Caco-2 (cell line): ENCODE measurements at regions of chr13 and their contacts with region 1.

Region 1: DNA sequence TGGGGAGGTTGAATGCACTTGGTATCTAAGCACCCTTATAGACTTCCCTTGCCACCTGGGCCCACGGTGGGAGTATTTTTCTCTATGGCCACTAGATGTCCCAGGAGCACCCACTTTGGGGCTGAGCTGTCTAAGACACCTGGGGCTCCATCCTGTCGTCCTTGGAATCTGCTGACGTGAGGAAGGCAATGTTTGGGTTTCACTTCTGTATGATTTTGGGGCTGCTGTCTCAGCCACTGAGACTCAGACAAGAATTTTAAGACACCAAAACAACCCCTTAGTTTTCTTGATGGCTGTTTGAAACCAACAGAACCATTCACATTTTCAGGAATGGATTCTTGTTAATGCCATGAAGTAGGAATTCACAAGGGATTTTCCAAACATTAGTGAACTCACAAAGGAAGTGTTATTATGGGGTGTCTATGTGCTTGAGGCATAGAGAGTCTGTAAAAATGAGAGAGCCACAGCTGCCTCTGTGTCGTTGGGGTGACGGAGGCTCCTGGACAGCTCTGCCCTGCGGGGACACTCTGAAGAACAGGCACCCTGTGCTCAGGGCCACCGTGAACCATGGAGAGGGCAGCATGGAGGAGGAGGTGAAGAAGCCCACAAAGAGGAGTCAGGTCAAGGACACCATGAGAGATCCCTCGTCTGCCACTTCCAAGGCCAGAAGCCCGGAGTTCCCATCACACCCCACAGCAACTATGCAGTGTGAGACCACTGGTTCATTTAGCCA is 106.8 kb upstream of the SPATA13 start:
- DNase-seq: peak; percentile 82 to 85
- H3K4me3 ChIP-seq: no peak overlapping the region
- H3K4me3 Mint-ChIP-seq: no peak overlapping the region
- H3K27ac Mint-ChIP-seq: no peak overlapping the region
- H3K4me1 ChIP-seq: no peaks in the 10 kb centered on the region
- H3K4me1 Mint-ChIP-seq: peaks cover 13% of the 10 kb centered on the region
- H3K27me3 ChIP-seq: no peaks in the 10 kb centered on the region
- H3K27me3 Mint-ChIP-seq: no peaks in the 10 kb centered on the region
- CTCF ChIP-seq: peak; percentile 82 to 85

Region 2: GRCh38 chr13:24020375-24020830 is 33.3 kb before region 1 on chr13:
- CTCF ChIA-PET with region 1: interaction called, 3 read pairs
- POLR2A ChIA-PET with region 1: no interaction called
- intact Hi-C with region 1: loop called (anchors 1 kb)
- DNase-seq: peak in 1 of 2 experiments; percentile 46
- H3K4me3 ChIP-seq: no peak overlapping the region
- H3K4me3 Mint-ChIP-seq: no peak overlapping the region
- H3K27ac Mint-ChIP-seq: no peak overlapping the region
- H3K4me1 ChIP-seq: no peaks in the 10 kb centered on the region; the same call in 1 of the 2 replicates
- H3K4me1 Mint-ChIP-seq: no peaks in the 10 kb centered on the region
- H3K27me3 ChIP-seq: no peaks in the 10 kb centered on the region
- H3K27me3 Mint-ChIP-seq: no peaks in the 10 kb centered on the region
- CTCF ChIP-seq: peak; percentile 56 to 77

Region 3: DNA sequence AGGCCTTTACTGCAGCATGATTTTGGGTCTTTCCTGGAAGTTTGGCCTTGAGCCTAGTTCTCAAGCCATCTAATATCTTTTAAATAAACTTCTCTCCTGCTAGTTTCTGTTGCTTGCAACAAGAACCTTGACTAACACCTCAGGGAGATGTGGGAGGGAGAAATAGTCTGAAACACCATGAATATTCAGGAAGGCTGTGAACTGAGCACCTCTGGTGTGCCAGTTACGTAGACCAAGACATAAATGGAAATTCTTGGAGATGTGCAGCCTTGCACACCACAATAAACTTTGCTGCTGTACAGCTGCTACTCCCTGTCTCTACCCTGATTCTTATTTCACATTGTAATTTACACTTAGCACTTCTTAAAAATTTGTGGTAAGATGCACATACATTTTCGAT is 20.0 kb after region 1 on chr13:
- CTCF ChIA-PET with region 1: no interaction called
- POLR2A ChIA-PET with region 1: no interaction called
- intact Hi-C with region 1: no loop called
- DNase-seq: no peak
- H3K4me3 ChIP-seq: no peak overlapping the region
- H3K4me3 Mint-ChIP-seq: no peak overlapping the region
- H3K27ac Mint-ChIP-seq: no peak overlapping the region
- H3K4me1 ChIP-seq: peaks cover 15% of the 10 kb centered on the region
- H3K4me1 Mint-ChIP-seq: peaks cover 9% of the 10 kb centered on the region
- H3K27me3 ChIP-seq: no peaks in the 10 kb centered on the region
- H3K27me3 Mint-ChIP-seq: no peaks in the 10 kb centered on the region
- CTCF ChIP-seq: no peak

Region 4: DNA sequence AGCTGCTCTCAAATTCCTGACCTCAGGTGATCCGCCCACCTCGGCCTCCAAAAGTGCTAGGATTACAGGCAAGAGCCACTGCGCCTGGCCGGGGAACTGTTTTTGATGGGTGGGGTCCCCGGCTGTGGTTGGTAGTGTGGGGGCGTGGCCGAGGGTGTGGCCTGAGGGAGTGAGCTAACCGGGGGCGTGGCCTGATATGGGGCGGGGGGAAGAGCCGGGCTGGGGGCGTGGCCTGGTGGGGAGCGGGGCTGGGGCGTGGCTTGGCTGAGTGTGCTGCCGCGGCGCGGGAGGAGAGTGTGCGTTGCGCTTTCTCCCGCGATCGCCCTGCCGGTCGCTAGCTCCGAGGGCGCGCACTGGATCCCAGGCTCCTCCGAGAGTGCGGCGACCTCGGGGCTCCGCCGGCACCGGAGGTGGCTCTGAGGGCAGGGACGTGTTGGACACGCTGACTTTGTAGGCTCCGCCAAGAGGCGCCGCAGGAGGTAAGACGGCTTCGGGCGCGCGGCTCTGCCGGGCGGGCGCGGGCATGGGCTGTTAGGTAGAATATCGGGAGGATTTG is 106.8 kb after region 1 on chr13 and contains the start of gene SPATA13:
- CTCF ChIA-PET with region 1: interaction called, 6 read pairs
- POLR2A ChIA-PET with region 1: no interaction called
- intact Hi-C with region 1: loop called (anchors 1 kb)
- DNase-seq: peak; percentile 94 to 96
- H3K4me3 ChIP-seq: peak within 1 kb of the TSS; percentile 97
- H3K4me3 Mint-ChIP-seq: peak within 1 kb of the TSS; percentile 73
- H3K27ac Mint-ChIP-seq: peak within 1 kb of the TSS; percentile 16
- H3K4me1 ChIP-seq: peaks cover 9% of the 10 kb centered on the region
- H3K4me1 Mint-ChIP-seq: peaks cover 12% of the 10 kb centered on the region
- H3K27me3 ChIP-seq: no peaks in the 10 kb centered on the region
- H3K27me3 Mint-ChIP-seq: no peaks in the 10 kb centered on the region
- CTCF ChIP-seq: no peak
- total RNA-seq, gene SPATA13: 10.1 and 10.5 TPM in 2 replicates

Region 5: GRCh38 chr13:24220086-24220703 is 166.5 kb after region 1 on chr13:
- CTCF ChIA-PET with region 1: interaction called, 9 read pairs
- POLR2A ChIA-PET with region 1: no interaction called
- intact Hi-C with region 1: loop called (anchors 1 kb)
- DNase-seq: peak; percentile 64 to 82
- H3K4me3 ChIP-seq: no peak overlapping the region
- H3K4me3 Mint-ChIP-seq: no peak overlapping the region
- H3K27ac Mint-ChIP-seq: peak overlapping the region; percentile 80
- H3K4me1 ChIP-seq: peaks cover 17% of the 10 kb centered on the region
- H3K4me1 Mint-ChIP-seq: peaks cover 18% of the 10 kb centered on the region
- H3K27me3 ChIP-seq: no peaks in the 10 kb centered on the region
- H3K27me3 Mint-ChIP-seq: no peaks in the 10 kb centered on the region
- CTCF ChIP-seq: peak; percentile 69 to 71

Region 6: GRCh38 chr13:24228852-24229458 is 175.3 kb after region 1 on chr13:
- CTCF ChIA-PET with region 1: interaction called, 16 read pairs
- POLR2A ChIA-PET with region 1: no interaction called
- intact Hi-C with region 1: loop called (anchors 2 kb)
- DNase-seq: peak in 1 of 2 experiments; percentile 60
- H3K4me3 ChIP-seq: no peak overlapping the region
- H3K4me3 Mint-ChIP-seq: no peak overlapping the region
- H3K27ac Mint-ChIP-seq: no peak overlapping the region
- H3K4me1 ChIP-seq: no peaks in the 10 kb centered on the region
- H3K4me1 Mint-ChIP-seq: peaks cover 6% of the 10 kb centered on the region
- H3K27me3 ChIP-seq: no peaks in the 10 kb centered on the region
- H3K27me3 Mint-ChIP-seq: no peaks in the 10 kb centered on the region
- CTCF ChIP-seq: peak; percentile 80 to 96